CD8-positive, alpha-beta T cell (primary cell): ENCODE measurements at regions of chrX and their contacts with region 1.

Region 1: GRCh38 chrX:130055103-130055502 is 55.2 kb downstream of the ELF4 start:
- DNase-seq: no peak
- ATAC-seq: no peak
- H3K4me3 ChIP-seq: no peak overlapping the region
- H3K4me3 Mint-ChIP-seq: no peak overlapping the region
- H3K27ac ChIP-seq: no peak overlapping the region
- H3K27ac Mint-ChIP-seq: no peak overlapping the region
- H3K4me1 ChIP-seq: no peaks in the 10 kb centered on the region
- H3K4me1 Mint-ChIP-seq: peaks cover 5% of the 10 kb centered on the region
- H3K27me3 ChIP-seq: no peaks in the 10 kb centered on the region
- H3K27me3 Mint-ChIP-seq: no peaks in the 10 kb centered on the region
- CTCF ChIP-seq: no peak

Region 2: DNA sequence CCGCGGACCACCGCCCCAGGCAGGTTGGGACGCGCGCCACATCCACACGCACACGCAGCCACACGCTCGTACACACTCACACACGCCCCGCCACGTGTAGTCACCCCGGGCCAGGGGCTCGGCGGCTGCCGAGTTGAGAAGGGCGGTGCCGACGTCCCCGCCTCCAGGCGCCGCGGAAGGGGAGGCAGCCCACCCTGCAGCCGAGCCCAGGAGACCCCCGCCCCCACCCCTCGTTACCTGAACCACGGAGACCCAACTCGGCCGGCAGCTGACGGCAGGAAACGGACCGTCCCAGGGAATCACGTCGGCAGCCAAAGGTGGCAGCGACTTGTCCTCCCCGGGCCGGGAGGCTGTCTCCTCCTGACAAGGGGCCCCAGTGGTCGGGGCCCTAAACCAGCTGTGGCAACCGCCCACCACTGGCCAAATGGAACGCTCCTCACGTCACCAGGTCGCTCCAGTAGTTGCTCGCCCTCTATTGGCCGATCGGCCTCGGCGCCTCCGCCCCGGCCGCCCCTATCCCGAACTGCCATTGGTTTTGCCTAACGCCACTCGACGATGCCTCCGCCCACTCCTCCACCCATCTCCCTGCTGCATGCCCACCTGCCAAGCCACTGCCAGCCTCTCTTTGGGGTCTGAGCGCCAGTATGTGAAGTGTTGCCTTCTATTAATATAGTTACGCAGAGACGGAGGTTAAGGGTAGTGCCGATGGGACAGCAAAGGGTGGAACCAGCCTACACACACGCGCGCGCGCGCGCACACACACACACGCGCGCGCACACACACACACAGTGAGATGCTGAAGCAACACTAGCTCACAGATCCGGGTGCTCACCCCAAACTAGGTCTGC is 211.4 kb before region 1 on chrX and contains the start of gene ZDHHC9:
- CTCF ChIA-PET with region 1: no interaction called
- POLR2A ChIA-PET with region 1: no interaction called
- intact Hi-C with region 1: loop called in 1 of 2 experiments (anchors 10 kb)
- DNase-seq: peak; percentile 70 to 91 (median 81)
- ATAC-seq: peak; percentile 96
- H3K4me3 ChIP-seq: peak within 1 kb of the TSS; percentile 67 to 73
- H3K4me3 Mint-ChIP-seq: peak within 1 kb of the TSS; percentile 86
- H3K27ac ChIP-seq: peak within 1 kb of the TSS; percentile 36 to 60
- H3K27ac Mint-ChIP-seq: peak within 1 kb of the TSS; percentile 64
- H3K4me1 ChIP-seq: peaks cover 24% of the 10 kb centered on the region
- H3K4me1 Mint-ChIP-seq: peaks cover 32% of the 10 kb centered on the region
- H3K27me3 ChIP-seq: no peaks in the 10 kb centered on the region
- H3K27me3 Mint-ChIP-seq: no peaks in the 10 kb centered on the region
- CTCF ChIP-seq: no peak
- total RNA-seq, gene ZDHHC9: 2.4 to 2.6 TPM